A673 (cell line): ENCODE measurements at regions of chr6 and their contacts with region 1.

Region 1: GRCh38 chr6:9564021-9564420 is 850.9 kb downstream of the TFAP2A start:
- DNase-seq: no peak
- H3K4me3 ChIP-seq: no peak overlapping the region
- H3K27ac ChIP-seq: no peak overlapping the region
- H3K4me1 ChIP-seq: peaks cover 16% of the 10 kb centered on the region
- H3K27me3 ChIP-seq: peaks cover 50% of the 10 kb centered on the region
- CTCF ChIP-seq: no peak

Region 2: GRCh38 chr6:8991844-8992243 is 572.2 kb before region 1 on chr6:
- CTCF ChIA-PET with region 1: no interaction called
- POLR2A ChIA-PET with region 1: interaction called, 14 read pairs
- intact Hi-C with region 1: loop called (anchors 10 kb)
- DNase-seq: no peak
- H3K4me3 ChIP-seq: no peak overlapping the region
- H3K27ac ChIP-seq: no peak overlapping the region
- H3K4me1 ChIP-seq: no peaks in the 10 kb centered on the region
- H3K27me3 ChIP-seq: no peaks in the 10 kb centered on the region
- CTCF ChIP-seq: no peak

Region 3: GRCh38 chr6:9795880-9796279 is 231.9 kb after region 1 on chr6:
- CTCF ChIA-PET with region 1: interaction called, 14 read pairs
- POLR2A ChIA-PET with region 1: no interaction called
- intact Hi-C with region 1: no loop called
- DNase-seq: peak; percentile 97
- H3K4me3 ChIP-seq: no peak overlapping the region
- H3K27ac ChIP-seq: peak overlapping the region; percentile 29
- H3K4me1 ChIP-seq: peaks cover 18% of the 10 kb centered on the region
- H3K27me3 ChIP-seq: no peaks in the 10 kb centered on the region
- CTCF ChIP-seq: no peak